ENCODE measurements at regions of chr1 and their contacts with region 1.

Region 1: DNA sequence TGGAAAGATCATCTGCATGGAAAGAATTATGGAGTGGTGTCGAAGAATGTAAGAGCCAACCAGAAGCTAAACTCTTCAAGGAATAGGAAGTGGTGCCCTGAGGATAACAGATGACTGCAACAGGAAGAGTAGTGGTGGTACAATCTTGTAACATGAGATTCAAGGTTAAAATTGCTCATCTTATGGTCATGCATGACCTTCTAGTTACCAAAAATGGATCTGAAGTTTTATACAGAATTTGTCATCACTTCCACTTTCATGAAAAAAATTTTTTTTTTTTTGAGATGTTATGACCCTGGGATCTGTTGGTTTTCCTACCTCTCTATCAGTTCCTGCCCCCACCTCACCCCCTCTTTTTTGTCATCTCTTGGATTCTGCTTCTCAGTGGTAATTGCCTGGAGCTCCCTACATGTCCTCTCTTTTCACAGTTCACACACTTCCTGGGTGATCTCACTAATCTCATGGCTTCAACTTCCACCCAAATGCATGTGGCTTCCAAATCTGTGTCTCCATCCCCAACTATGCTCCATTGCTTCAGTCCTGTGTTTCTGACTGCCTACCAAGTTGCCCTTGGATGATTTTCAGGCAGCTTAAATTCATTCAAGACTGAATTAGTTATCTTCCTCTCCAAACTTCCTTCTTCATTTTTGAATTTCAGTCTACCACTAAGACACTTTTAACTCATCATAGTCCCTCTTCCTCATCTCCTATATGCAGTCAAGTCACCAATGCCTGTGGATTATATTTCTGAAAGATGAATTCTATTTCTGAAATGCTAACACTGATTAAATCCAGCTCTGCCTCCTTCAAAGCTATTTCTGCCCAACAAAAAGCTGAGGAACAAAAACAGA is 48.4 kb downstream of the SLAMF6 start:
- DNase-seq: no peak
- H3K4me3 Mint-ChIP-seq: no peak overlapping the region
- H3K27ac Mint-ChIP-seq: no peak overlapping the region
- H3K4me1 Mint-ChIP-seq: peaks cover 6% of the 10 kb centered on the region
- H3K27me3 Mint-ChIP-seq: no peaks in the 10 kb centered on the region

Region 2: GRCh38 chr1:160460683-160461287 is 13.8 kb before region 1 on chr1:
- intact Hi-C with region 1: loop called (anchors 1 kb)
- DNase-seq: no peak
- H3K4me3 Mint-ChIP-seq: peak overlapping the region; percentile 76
- H3K27ac Mint-ChIP-seq: peak overlapping the region; percentile 98
- H3K4me1 Mint-ChIP-seq: peaks cover 65% of the 10 kb centered on the region
- H3K27me3 Mint-ChIP-seq: no peaks in the 10 kb centered on the region

Region 3: DNA sequence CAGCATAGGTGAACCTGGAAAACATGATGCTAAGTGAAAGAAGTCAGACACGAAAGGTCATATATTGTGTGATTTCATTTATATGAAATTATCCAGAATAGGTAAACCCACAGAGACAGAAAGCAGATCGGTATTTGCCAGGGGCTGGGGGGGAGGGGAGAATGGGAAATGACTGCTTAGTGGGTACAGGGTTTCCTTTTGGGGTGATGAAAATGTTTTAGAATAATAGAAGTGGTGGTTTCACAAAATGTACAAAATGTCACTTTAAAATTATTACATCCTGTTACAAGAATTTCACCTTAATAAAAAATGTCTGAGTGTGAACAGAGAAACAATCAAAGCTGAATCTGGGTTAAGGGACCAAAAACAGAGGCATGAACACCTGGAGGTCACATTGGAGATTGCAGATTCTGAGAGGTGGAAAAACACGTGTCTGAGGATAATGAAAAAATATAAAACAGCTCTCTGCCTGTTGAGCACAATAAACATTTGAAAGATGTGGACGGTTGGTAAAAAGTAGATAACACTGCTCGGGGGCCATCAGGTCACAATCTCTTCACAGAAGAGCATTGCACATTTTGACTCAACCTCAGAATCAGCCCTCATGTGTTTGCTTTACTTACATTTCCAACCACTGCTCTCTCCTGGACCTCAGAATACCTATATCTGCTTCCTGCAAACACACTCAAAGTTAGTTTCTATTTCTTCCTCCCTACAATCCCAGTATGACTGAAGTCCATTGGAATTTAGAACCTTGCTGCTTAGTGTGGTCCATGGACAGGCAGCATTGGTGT is 45.2 kb after region 1 on chr1:
- intact Hi-C with region 1: loop called (anchors 1 kb)
- DNase-seq: peak; percentile 31
- H3K4me3 Mint-ChIP-seq: peak overlapping the region; percentile 85
- H3K27ac Mint-ChIP-seq: peak overlapping the region; percentile 97
- H3K4me1 Mint-ChIP-seq: peaks cover 69% of the 10 kb centered on the region
- H3K27me3 Mint-ChIP-seq: no peaks in the 10 kb centered on the region

Region 4: DNA sequence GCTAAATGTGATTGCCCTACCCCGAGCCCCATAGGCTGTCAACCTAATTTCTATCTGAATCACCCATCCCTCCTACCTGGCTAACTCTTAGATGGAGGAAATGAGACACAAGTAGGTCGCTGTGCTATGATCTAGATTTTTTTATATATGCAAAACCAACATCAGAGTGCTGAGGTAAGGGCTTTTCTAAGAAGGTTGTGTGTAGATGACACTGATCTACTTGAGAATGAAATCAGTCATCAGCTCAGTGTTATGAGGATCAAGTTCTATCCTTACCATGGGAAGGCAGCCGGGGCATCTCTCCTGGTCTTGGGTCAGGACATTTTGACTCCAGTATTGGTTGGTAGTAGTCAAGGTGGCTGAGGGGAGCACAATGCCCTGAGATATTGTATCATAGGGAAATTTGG is 148.6 kb after region 1 on chr1:
- intact Hi-C with region 1: loop called (anchors 1 kb)
- DNase-seq: no peak
- H3K4me3 Mint-ChIP-seq: peak overlapping the region; percentile 68
- H3K27ac Mint-ChIP-seq: peak overlapping the region; percentile 100
- H3K4me1 Mint-ChIP-seq: peaks cover 87% of the 10 kb centered on the region
- H3K27me3 Mint-ChIP-seq: no peaks in the 10 kb centered on the region

Measured in activated T-helper 2 cell treated with anti-CD3 and anti-CD28 coated beads, Interferon-gamma antibody, Interleukin-2, Interleukin-4, amounts not matched to agents 10 μg/mL and 5 μg/mL and 100 μg/mL, durations not matched to agents 14 hours and 24 hours and 36 hours (primary cell).